ENCODE measurements at regions of chr21 and their contacts with region 1.

Region 1: DNA sequence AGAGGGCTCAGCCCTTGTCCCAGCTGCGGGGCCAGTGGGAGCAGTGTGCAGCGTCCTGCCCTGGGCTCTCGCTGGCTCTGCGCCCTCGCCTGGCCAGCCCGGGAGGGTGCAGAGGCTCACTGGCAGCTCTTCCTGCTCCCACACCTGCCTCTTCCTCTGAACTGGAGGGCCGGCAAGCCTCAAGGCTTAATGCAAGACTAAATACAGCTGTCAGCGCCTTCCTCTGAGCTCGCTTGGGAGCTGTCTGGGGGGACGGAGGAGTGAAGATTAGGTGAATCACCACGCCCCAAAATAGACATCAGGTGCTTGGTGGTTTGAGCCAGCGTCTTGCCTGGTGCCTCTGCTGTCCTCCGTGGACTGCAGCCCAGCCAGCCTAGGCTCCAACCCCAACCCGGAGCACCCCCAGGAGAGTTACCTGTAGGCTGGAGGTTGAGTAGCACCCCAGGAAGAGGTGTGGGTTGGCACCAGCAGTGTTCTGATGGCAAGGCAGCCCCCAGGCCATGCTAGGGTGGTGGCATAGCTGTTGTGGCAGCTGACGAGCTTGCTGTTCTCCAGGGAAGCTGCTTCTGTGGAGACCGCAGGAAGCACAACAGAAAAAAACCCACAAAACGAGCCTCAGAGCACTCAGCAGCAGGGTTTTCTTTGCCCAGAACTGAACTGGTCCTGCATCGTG is 36.9 kb downstream of the UMODL1 start:
- DNase-seq: peak; percentile 72
- H3K4me3 Mint-ChIP-seq: no peak overlapping the region
- H3K27ac Mint-ChIP-seq: no peak overlapping the region
- H3K4me1 Mint-ChIP-seq: peaks cover 7% of the 10 kb centered on the region
- H3K27me3 Mint-ChIP-seq: peaks cover 2% of the 10 kb centered on the region

Region 2: DNA sequence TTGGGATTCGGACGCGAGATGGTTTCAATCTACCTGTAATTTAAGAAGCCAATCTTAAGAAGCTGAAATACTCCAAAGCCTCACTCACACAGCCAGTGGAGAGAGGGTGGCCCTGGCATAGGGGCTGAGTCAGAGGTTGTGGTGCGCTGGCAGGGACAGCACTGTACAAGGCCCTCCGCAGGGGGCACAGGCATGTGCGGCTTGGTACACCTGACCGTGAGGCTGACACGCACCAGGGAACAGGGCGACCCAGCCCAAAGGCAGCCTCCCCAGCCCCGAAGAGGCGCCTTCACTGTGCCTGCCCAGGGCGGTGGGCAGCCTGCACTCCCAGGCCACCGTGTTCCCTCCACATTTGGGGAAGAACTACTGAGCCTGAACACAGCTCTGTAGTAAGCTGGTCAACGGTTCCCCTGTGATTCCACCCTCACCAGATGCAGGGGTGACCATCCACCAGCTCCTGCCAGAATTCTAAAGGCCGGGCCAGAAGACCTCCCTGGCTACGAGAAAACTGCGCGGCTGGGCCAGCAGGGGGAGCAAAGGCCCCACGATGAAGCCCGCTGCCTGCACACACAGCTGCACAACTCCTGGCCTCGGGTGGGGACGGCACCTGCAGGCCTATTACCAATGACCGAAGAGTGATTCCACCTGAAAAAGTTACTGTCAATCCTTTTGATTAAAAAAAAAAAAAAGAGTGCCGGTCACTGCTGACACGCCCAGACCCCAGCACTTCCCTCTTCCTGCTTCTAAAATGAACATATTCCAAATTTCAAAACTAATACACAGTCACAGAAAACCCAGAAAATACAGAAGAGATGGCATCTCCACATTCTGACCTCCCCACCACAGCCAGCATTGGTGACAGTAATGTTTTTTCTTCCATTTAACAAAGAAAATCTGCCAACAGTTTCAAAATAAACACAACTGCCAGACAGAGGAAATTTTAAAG is 291.5 kb before region 1 on chr21:
- CTCF ChIA-PET with region 1: interaction called, 28 read pairs
- POLR2A ChIA-PET with region 1: no interaction called
- DNase-seq: peak; percentile 55
- H3K4me3 Mint-ChIP-seq: no peak overlapping the region
- H3K27ac Mint-ChIP-seq: no peak overlapping the region
- H3K4me1 Mint-ChIP-seq: no peaks in the 10 kb centered on the region
- H3K27me3 Mint-ChIP-seq: no peaks in the 10 kb centered on the region

Region 3: GRCh38 chr21:41903559-41904351 is 204.3 kb before region 1 on chr21:
- CTCF ChIA-PET with region 1: no interaction called
- POLR2A ChIA-PET with region 1: no interaction called
- DNase-seq: no peak
- H3K4me3 Mint-ChIP-seq: no peak overlapping the region
- H3K27ac Mint-ChIP-seq: no peak overlapping the region
- H3K4me1 Mint-ChIP-seq: peaks cover 14% of the 10 kb centered on the region
- H3K27me3 Mint-ChIP-seq: no peaks in the 10 kb centered on the region

Region 4: GRCh38 chr21:42062236-42063022 is 45.6 kb before region 1 on chr21:
- CTCF ChIA-PET with region 1: no interaction called
- POLR2A ChIA-PET with region 1: interaction called, 11 read pairs
- DNase-seq: peak; percentile 88
- H3K4me3 Mint-ChIP-seq: peak overlapping the region; percentile 74
- H3K27ac Mint-ChIP-seq: peak overlapping the region; percentile 98
- H3K4me1 Mint-ChIP-seq: peaks cover 47% of the 10 kb centered on the region
- H3K27me3 Mint-ChIP-seq: peaks cover 6% of the 10 kb centered on the region

Region 5: GRCh38 chr21:42097860-42098454 is 10.1 kb before region 1 on chr21:
- CTCF ChIA-PET with region 1: interaction called, 13 read pairs
- POLR2A ChIA-PET with region 1: no interaction called
- DNase-seq: no peak
- H3K4me3 Mint-ChIP-seq: no peak overlapping the region
- H3K27ac Mint-ChIP-seq: no peak overlapping the region
- H3K4me1 Mint-ChIP-seq: no peaks in the 10 kb centered on the region
- H3K27me3 Mint-ChIP-seq: peaks cover 19% of the 10 kb centered on the region